Thyroid gland (tissue), 4 donors: ENCODE measurements at regions of chr2 and their contacts with region 1.

Region 1: GRCh38 chr2:11863513-11864328 is 117.3 kb downstream of the LPIN1 start:
- DNase-seq: peak; percentile 81 to 85
- H3K4me3 ChIP-seq: no peak overlapping the region
- H3K27ac ChIP-seq: no peak overlapping the region
- H3K4me1 ChIP-seq: peaks cover 5 to 8% of the 10 kb centered on the region in 2 donors
- H3K27me3 ChIP-seq: no peaks in the 10 kb centered on the region
- CTCF ChIP-seq: peak; percentile 79 to 97 (median 95)
- POLR2A ChIP-seq: no peak

Region 2: DNA sequence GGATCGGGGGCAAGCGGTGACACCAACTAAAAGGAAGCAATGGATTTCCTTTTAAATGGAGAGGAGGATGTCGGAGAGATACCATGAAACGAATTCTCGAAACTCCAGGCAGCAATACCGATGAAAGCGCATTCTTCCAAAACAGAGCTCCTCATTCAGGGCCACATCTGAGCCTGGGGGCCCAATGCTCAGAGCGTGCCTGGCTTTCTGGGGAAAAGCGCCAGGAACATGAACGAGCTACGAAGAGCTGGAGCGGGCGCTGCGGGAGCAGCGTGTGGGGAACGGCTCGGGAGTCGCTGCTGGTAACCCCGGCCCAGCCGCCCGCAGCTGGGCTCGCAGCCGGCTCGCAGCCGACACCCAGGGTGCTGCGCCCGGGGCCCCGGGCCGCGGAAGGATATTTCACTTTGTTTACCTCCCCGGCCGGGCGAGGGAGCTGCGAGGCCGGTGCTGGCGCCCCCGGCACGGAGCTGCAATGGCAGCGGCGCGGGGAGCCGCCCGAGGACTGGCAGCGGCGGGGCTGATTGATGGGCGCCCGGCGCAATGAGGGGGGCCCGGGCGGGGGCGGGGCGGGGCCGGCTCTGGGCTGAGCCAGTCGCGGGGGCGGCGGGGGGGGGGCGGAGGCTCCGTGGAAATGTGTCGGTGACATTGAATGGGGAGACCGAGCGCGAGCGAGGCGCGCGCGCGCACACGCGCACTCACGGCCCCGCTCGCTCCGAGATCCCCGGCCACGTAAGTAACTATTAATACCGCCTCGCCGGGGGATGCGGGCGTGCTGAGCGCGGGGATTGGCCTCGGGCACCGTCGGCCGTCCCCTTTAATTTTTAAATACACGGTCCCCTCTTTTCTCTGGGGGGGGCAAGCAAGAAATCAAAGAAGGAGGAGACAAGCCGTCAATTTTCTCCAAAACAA is 852.8 kb after region 1 on chr2 and contains the start of gene TRIB2:
- intact Hi-C with region 1: loop called (anchors 10 kb)
- DNase-seq: peak; percentile 90 to 91
- H3K4me3 ChIP-seq: peak within 1 kb of the TSS; percentile 38 to 74 (median 74)
- H3K27ac ChIP-seq: peak within 1 kb of the TSS; percentile 85 to 94 (median 91)
- H3K4me1 ChIP-seq: peaks cover 5 to 16% of the 10 kb centered on the region in 2 donors
- H3K27me3 ChIP-seq: no peaks in the 10 kb centered on the region
- CTCF ChIP-seq: no peak
- POLR2A ChIP-seq: peak in 1 of 2 donors; percentile 60
- total RNA-seq, gene TRIB2: 30.8 to 59.8 (median 37.1) TPM

Region 3: GRCh38 chr2:13006829-13007717 is 1143.4 kb after region 1 on chr2:
- intact Hi-C with region 1: loop called (anchors 10 kb)
- DNase-seq: peak; percentile 39 to 49
- H3K4me3 ChIP-seq: no peak overlapping the region
- H3K27ac ChIP-seq: no peak overlapping the region
- H3K4me1 ChIP-seq: no peaks in the 10 kb centered on the region
- H3K27me3 ChIP-seq: no peaks in the 10 kb centered on the region
- CTCF ChIP-seq: peak; percentile 74 to 88 (median 80)
- POLR2A ChIP-seq: no peak